Common myeloid progenitor, CD34-positive (primary cell): ENCODE measurements at regions of chr22 and their contacts with region 1.

Region 1: GRCh38 chr22:22959147-22959827 is 71.7 kb downstream of the IGLL5 start:
- DNase-seq: peak; percentile 86 to 90 (median 86)
- H3K4me3 ChIP-seq: no peak overlapping the region
- H3K27ac ChIP-seq: no peak overlapping the region
- H3K4me1 ChIP-seq: peaks cover 4 to 9% (median 8%) of the 10 kb centered on the region in 4 experiments
- H3K27me3 ChIP-seq: peaks cover 0 to 5% (median 0%) of the 10 kb centered on the region in 5 experiments

Region 2: DNA sequence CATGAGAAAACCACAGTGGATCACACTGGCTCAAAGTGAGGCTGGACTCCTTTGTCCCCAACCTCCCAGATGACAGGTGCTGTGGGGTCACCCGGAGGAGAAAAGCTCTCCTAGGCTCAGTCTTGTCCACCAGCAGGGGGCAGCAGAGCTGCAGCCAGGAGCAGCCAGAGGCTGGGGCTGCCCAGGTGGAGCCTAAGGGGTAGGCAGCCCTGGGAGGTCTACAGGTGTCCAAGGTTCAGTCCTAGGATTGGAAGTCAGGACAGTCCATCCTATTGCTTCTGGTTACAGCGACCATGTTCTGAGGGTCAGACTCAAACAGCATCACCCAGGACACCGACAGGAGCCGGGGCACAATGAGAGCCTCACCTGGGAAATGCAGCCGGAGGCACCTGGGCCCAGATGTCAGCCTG is 149.3 kb before region 1 on chr22:
- CTCF ChIA-PET with region 1: interaction called, 40 read pairs
- POLR2A ChIA-PET with region 1: no interaction called
- DNase-seq: peak; percentile 50 to 67 (median 59)
- H3K4me3 ChIP-seq: no peak overlapping the region
- H3K27ac ChIP-seq: no peak overlapping the region
- H3K4me1 ChIP-seq: peaks cover 0 to 11% (median 3%) of the 10 kb centered on the region in 4 experiments
- H3K27me3 ChIP-seq: peaks cover 0 to 4% (median 0%) of the 10 kb centered on the region in 5 experiments

Region 3: DNA sequence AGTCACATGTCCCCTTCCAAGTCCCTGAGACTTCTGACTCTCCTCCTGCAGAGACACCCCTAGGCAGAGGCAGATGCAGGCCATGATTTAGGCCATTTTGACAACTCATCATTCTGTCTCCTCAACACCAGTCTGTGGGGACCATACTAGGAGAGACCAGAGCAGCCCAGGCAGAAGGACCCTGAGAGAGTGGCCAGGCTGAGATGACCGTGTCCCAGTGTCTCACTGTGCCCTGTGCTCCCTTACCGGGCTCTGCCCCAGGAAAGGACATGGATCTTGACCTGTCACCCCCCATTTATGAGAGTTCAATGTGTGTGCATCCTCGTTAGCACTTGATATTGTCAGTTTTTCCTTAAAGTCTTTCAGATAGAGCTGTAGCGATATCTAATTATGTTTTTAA is 124.0 kb before region 1 on chr22:
- CTCF ChIA-PET with region 1: no interaction called
- POLR2A ChIA-PET with region 1: no interaction called
- DNase-seq: no peak
- H3K4me3 ChIP-seq: no peak overlapping the region
- H3K27ac ChIP-seq: no peak overlapping the region
- H3K4me1 ChIP-seq: peaks cover 3 to 36% (median 10%) of the 10 kb centered on the region in 4 experiments
- H3K27me3 ChIP-seq: no peaks in the 10 kb centered on the region

Region 4: GRCh38 chr22:22870577-22871404 is 88.5 kb before region 1 on chr22:
- CTCF ChIA-PET with region 1: interaction called, 12 read pairs
- POLR2A ChIA-PET with region 1: no interaction called
- DNase-seq: peak in 2 of 3 donors; percentile 47 to 49
- H3K4me3 ChIP-seq: no peak overlapping the region
- H3K27ac ChIP-seq: no peak overlapping the region
- H3K4me1 ChIP-seq: peaks cover 0 to 11% (median 1%) of the 10 kb centered on the region in 4 experiments
- H3K27me3 ChIP-seq: no peaks in the 10 kb centered on the region

Region 5: GRCh38 chr22:22976033-22976922 is 17.0 kb after region 1 on chr22:
- CTCF ChIA-PET with region 1: interaction called, 39 read pairs
- POLR2A ChIA-PET with region 1: no interaction called
- DNase-seq: no peak
- H3K4me3 ChIP-seq: no peak overlapping the region
- H3K27ac ChIP-seq: no peak overlapping the region
- H3K4me1 ChIP-seq: no peaks in the 10 kb centered on the region
- H3K27me3 ChIP-seq: peaks cover 0 to 11% (median 0%) of the 10 kb centered on the region in 5 experiments

Region 6: GRCh38 chr22:23281406-23282088 is 322.3 kb after region 1 on chr22:
- CTCF ChIA-PET with region 1: interaction called, 17 read pairs
- POLR2A ChIA-PET with region 1: no interaction called
- DNase-seq: peak; percentile 82 to 88 (median 84)
- H3K4me3 ChIP-seq: peak overlapping the region in 1 of 7 experiments; percentile 24
- H3K27ac ChIP-seq: no peak overlapping the region
- H3K4me1 ChIP-seq: peaks cover 0 to 11% (median 9%) of the 10 kb centered on the region in 4 experiments
- H3K27me3 ChIP-seq: no peaks in the 10 kb centered on the region